ENCODE measurements at regions of chr15 and their contacts with region 1.

Region 1: DNA sequence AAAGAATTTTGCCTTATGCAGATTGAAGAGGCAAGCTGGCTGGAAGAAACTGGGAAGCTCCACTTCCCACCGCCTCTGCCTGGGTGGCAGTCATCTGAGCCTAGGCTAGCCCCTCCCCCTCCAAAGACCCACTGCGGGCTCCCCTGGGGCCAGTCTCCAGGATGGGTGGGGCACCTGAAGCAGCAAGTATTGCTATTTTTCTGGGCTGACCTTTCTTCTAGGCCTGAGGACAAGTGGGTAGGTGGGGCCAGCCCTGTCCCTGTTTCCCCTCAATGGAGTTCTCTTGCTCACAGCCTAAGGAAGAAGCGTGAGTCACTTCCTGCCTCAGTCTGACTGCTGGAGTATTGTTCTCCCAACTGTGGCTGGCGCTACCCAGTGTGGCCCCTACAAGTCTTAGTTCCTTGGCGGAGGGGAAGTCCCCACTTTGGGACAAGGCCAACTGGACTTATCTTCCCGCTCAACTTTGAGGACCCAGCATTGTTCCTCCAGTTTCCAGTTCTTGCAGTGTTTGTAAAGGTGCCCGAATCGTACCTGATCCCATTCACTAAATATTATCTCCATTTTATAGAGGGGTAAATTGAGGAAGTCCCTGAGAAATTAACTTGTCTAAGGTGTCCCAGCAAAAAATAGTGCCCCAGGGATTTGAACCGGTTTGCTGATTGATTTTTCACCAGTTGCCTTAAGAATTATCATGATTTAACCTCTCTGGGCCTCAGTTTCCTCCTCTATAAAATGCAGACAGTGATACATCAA is 1.4 kb downstream of the FURIN start:
- DNase-seq: peak; percentile 50
- ATAC-seq: peak; percentile 59
- H3K4me3 ChIP-seq: peak overlapping the region in 1 of 5 experiments; percentile 18
- H3K4me3 Mint-ChIP-seq: peak overlapping the region; percentile 92
- H3K27ac ChIP-seq: peak overlapping the region; percentile 19 to 32
- H3K27ac Mint-ChIP-seq: peak overlapping the region; percentile 95
- H3K4me1 ChIP-seq: peaks cover 31 to 39% of the 10 kb centered on the region in 2 donors
- H3K4me1 Mint-ChIP-seq: peaks cover 41% of the 10 kb centered on the region
- H3K27me3 ChIP-seq: no peaks in the 10 kb centered on the region
- H3K27me3 Mint-ChIP-seq: no peaks in the 10 kb centered on the region
- CTCF ChIP-seq: no peak

Region 2: DNA sequence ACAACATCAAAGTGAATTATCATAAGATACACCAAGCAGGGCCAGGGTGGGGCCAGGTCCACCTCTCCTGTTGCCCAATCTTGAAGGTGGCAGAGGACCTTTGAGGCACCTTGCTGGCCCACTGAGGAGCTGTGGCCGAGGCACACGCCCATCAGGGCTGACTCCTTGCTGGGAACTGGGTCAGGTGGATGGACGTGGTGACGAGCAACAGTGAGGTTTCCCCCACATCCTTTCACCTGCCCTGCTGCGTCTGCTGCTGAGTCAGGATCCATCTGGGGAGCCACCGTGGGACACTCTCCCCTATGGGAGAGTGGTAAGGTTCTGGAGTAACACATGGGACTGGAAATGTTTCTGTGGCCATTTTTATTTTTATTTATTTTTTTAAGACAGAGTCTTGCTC is 18.7 kb before region 1 on chr15:
- CTCF ChIA-PET with region 1: interaction called, 6 read pairs
- POLR2A ChIA-PET with region 1: interaction called, 12 read pairs
- intact Hi-C with region 1: loop called (anchors 1 kb)
- DNase-seq: no peak
- ATAC-seq: no peak
- H3K4me3 ChIP-seq: no peak overlapping the region
- H3K4me3 Mint-ChIP-seq: peak overlapping the region; percentile 66
- H3K27ac ChIP-seq: no peak overlapping the region
- H3K27ac Mint-ChIP-seq: peak overlapping the region; percentile 41
- H3K4me1 ChIP-seq: peaks cover 54 to 56% of the 10 kb centered on the region in 2 donors
- H3K4me1 Mint-ChIP-seq: peaks cover 54% of the 10 kb centered on the region
- H3K27me3 ChIP-seq: no peaks in the 10 kb centered on the region
- H3K27me3 Mint-ChIP-seq: no peaks in the 10 kb centered on the region
- CTCF ChIP-seq: no peak

Region 3: GRCh38 chr15:91049378-91050127 is 179.8 kb after region 1 on chr15:
- CTCF ChIA-PET with region 1: no interaction called
- POLR2A ChIA-PET with region 1: no interaction called
- intact Hi-C with region 1: no loop called
- DNase-seq: peak; percentile 66
- ATAC-seq: peak; percentile 81
- H3K4me3 ChIP-seq: no peak overlapping the region
- H3K4me3 Mint-ChIP-seq: no peak overlapping the region
- H3K27ac ChIP-seq: no peak overlapping the region
- H3K27ac Mint-ChIP-seq: no peak overlapping the region
- H3K4me1 ChIP-seq: peaks cover 10 to 13% of the 10 kb centered on the region in 2 donors
- H3K4me1 Mint-ChIP-seq: peaks cover 13% of the 10 kb centered on the region
- H3K27me3 ChIP-seq: peaks cover 0 to 11% (median under 1%) of the 10 kb centered on the region in 4 experiments
- H3K27me3 Mint-ChIP-seq: peaks cover 31% of the 10 kb centered on the region
- CTCF ChIP-seq: peak; percentile 60

Measured in B cell (primary cell).